Dorsolateral prefrontal cortex (tissue), 120 donors: ENCODE measurements at regions of chr11 and their contacts with region 1.

Region 1: GRCh38 chr11:100687630-100688395 is 725 bp downstream of the ARHGAP42 start:
- DNase-seq: peak in 6 of 10 donors; percentile 8 to 45 (median 30)
- H3K4me3 ChIP-seq: peak overlapping the region; percentile 40 to 81 (median 67)
- H3K27ac ChIP-seq: peak overlapping the region in 36 of 59 donors; percentile 20 to 85 (median 66)
- H3K27me3 ChIP-seq: peaks cover 0 to 18% (median 0%) of the 10 kb centered on the region in 45 donors
- CTCF ChIP-seq: peak in 53 of 56 donors; percentile 11 to 65 (median 51)

Region 2: DNA sequence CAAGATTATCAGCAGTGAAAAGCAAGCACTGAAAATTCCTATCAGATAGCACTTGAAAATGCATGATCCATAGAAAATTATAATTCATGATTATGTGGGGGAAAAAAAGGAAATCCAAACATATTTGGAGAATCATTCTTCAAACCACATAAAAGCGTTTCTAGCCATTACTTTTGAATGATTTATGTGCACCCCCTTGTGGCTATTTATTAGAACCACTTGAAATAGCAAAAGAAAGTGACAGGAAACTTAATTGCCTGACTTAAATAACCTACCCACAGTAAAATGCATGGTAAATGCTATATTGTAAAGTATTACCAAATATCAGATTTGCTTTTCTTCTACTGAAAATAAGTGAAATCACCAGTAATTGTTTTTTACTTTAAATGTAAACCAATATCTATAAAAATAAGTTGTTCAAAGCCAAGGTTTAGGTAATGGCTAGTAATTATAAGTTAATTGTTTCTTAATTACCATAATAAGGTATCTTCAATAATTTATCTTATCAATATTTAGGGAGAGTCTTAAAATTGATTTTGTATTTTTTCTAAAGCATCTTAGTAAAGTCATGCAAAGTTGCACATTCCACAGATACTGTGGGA is 167.8 kb after region 1 on chr11:
- intact Hi-C with region 1: loop called (anchors 5 to 10 kb)
- DNase-seq: no peak
- H3K4me3 ChIP-seq: no peak overlapping the region
- H3K27ac ChIP-seq: no peak overlapping the region
- H3K27me3 ChIP-seq: no peaks in the 10 kb centered on the region
- CTCF ChIP-seq: peak; percentile 60 to 91 (median 76)

Region 3: DNA sequence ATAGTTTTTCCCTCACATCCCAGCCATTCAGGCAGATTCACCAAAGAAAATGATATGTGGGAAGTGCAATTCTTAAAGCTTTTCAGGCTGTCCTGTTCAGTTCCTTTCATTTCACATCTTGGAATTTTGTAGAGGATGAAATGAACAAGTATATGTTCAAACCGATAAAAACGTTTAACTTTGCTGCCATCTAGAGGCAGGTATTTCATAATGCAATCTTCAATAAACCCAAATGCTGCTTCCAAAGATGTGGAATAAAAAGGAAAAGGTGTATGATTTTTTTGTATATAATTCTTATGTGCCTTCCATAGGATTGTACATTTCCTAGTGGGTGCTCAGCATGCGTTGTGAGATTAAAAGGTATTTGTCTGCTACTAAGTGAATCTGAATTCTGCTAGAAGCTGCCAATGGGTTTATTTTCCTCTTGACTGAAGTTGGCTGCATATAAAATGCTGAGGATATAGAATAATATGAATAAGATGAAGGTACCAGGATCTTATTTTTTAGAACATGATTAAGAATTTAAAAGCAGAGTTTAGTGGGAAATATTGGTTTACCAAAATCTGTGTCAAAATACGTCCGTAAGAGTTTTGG is 242.5 kb after region 1 on chr11:
- intact Hi-C with region 1: loop called (anchors 10 kb)
- DNase-seq: no peak
- H3K4me3 ChIP-seq: no peak overlapping the region
- H3K27ac ChIP-seq: no peak overlapping the region
- H3K27me3 ChIP-seq: no peaks in the 10 kb centered on the region
- CTCF ChIP-seq: peak; percentile 51 to 91 (median 78)